ENCODE measurements at regions of chr10 and their contacts with region 1.

Region 1: DNA sequence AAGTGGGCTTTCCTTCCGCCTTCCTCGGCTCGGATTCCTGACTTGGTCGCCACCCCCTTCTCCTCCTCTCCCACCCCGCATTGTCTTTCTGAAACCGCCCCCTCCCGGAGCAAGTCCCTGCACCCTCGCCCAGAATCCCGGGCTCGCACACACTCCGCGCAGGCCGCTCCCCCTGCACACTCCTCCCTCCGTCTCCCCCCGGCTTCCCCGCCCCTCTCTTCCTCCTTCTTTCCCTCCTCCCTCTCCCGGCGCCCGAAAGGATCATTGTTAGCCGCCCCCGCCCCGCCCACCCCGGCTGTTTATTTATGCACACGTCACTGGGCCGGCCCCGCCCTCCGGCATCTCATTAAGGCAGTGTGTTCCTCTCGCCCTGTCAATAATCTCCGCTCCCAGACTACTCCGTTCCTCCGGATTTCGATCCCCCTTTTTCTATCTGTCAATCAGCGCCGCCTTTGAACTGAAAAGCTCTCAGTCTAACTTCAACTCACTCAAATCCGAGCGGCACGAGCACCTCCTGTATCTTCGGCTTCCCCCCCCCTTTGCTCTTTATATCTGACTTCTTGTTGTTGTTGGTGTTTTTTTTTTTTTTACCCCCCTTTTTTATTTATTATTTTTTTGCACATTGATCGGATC is at the start of gene TCF7L2:
- DNase-seq: peak; percentile 95
- ATAC-seq: peak; percentile 87
- H3K4me3 ChIP-seq: peak within 1 kb of the TSS; percentile 90
- H3K27ac ChIP-seq: peak within 1 kb of the TSS; percentile 99
- H3K4me1 ChIP-seq: peaks cover 2% of the 10 kb centered on the region; the same call in 1 of the 2 replicates
- H3K27me3 ChIP-seq: no peaks in the 10 kb centered on the region
- CTCF ChIP-seq: 0 out of 2 replicates have a peak, but pooled peaks have one; percentile 2
- POLR2A ChIP-seq: peak; percentile 80
- RAD21 ChIP-seq: peak; percentile 13; the same call in 1 of the 2 replicates
- total RNA-seq, gene TCF7L2: 1.3 and 1.7 TPM in 2 replicates

Region 2: DNA sequence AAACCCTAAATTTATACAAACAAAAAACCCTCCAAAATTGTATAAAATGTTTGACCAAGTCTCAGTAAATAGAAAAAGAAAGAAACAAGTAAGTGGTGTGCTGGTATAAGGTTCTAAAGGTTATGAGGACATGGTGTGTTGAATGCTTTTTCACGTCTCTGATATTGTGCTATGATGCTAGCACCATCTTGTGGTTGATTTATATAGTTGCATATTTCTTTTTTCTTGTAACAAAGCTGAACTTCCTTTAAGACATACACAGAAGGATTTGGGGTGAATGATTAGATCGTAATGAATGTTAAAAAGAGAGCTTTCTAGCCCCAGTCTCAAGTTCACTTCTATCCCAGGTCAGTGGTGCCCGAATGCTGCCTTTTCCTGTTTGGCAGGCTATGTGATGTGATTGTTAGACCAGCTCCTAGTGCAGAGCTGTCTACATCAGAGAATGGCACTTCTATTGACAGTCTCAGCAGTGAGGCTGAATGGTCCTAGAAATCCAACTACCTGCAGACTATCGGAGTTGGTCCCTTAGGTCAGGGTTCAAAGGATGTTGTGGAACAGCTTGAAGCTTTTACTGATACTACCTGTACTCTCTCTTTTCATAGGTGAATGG is 478.0 kb before region 1 on chr10:
- CTCF ChIA-PET with region 1: interaction called, 5 read pairs
- POLR2A ChIA-PET with region 1: no interaction called
- dilution Hi-C with region 1: no loop called
- in situ Hi-C with region 1: no loop called
- intact Hi-C with region 1: loop called (anchors 1 kb)
- DNase-seq: peak; percentile 68
- ATAC-seq: peak; percentile 76
- H3K4me3 ChIP-seq: no peak overlapping the region
- H3K27ac ChIP-seq: no peak overlapping the region
- H3K4me1 ChIP-seq: no peaks in the 10 kb centered on the region
- H3K27me3 ChIP-seq: no peaks in the 10 kb centered on the region
- CTCF ChIP-seq: peak; percentile 69
- POLR2A ChIP-seq: no peak
- RAD21 ChIP-seq: peak; percentile 77

Region 3: DNA sequence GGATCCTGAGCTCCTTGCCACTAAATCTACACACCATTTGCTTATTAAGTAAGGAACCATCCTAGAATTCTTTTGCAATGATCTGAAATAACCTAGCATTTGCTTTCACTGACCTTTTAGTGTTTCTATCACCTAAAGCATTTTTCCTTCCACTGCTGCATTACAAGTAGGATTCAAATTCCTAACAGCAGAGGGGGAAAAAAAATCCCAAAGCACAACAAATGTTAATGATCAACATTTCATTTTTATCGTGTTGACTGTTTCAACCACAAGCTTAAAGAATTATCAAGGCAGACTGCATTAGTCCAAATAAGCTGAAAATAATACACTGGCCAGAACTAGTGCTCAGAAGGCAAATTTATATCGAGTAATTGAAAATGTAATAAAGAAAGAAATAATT is 174.6 kb before region 1 on chr10:
- CTCF ChIA-PET with region 1: no interaction called
- POLR2A ChIA-PET with region 1: no interaction called
- dilution Hi-C with region 1: no loop called
- in situ Hi-C with region 1: no loop called
- intact Hi-C with region 1: loop called (anchors 5 kb)
- DNase-seq: peak; percentile 46
- ATAC-seq: peak; percentile 62
- H3K4me3 ChIP-seq: no peak overlapping the region
- H3K27ac ChIP-seq: no peak overlapping the region
- H3K4me1 ChIP-seq: no peaks in the 10 kb centered on the region; the same call in 1 of the 2 replicates
- H3K27me3 ChIP-seq: no peaks in the 10 kb centered on the region
- CTCF ChIP-seq: peak; percentile 43
- POLR2A ChIP-seq: no peak
- RAD21 ChIP-seq: peak; percentile 15; the same call in 1 of the 2 replicates

Region 4: GRCh38 chr10:113058523-113058961 is 108.6 kb after region 1 on chr10:
- CTCF ChIA-PET with region 1: no interaction called
- POLR2A ChIA-PET with region 1: no interaction called
- dilution Hi-C with region 1: no loop called
- in situ Hi-C with region 1: no loop called
- intact Hi-C with region 1: loop called (anchors 2 kb)
- DNase-seq: peak; percentile 78
- ATAC-seq: peak; percentile 48
- H3K4me3 ChIP-seq: no peak overlapping the region
- H3K27ac ChIP-seq: peak overlapping the region; percentile 95
- H3K4me1 ChIP-seq: peaks cover 33% of the 10 kb centered on the region
- H3K27me3 ChIP-seq: no peaks in the 10 kb centered on the region
- CTCF ChIP-seq: no peak
- POLR2A ChIP-seq: no peak
- RAD21 ChIP-seq: no peak

Region 5: DNA sequence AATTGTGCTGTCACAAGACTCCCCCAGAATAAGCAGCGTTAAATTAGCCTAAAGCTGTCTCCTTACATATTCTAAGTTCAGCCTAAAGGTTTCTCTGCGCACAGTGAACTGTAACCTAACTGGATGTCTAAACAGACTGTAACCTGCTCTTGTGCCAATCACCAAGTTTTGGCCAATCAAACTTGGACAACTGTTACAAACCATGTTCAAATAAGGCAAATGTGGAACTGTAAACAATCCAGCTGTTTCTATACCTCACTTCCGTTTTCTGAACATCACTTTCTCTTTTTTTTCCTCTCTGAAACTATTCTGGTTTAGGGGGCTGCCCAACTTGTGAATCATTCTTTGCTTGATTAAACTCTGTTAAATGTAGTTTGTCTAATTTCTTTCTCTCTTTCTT is 350.6 kb after region 1 on chr10:
- CTCF ChIA-PET with region 1: no interaction called
- POLR2A ChIA-PET with region 1: no interaction called
- dilution Hi-C with region 1: no loop called
- in situ Hi-C with region 1: no loop called
- intact Hi-C with region 1: loop called (anchors 10 kb)
- DNase-seq: no peak
- ATAC-seq: no peak
- H3K4me3 ChIP-seq: no peak overlapping the region
- H3K27ac ChIP-seq: no peak overlapping the region
- H3K4me1 ChIP-seq: no peaks in the 10 kb centered on the region
- H3K27me3 ChIP-seq: no peaks in the 10 kb centered on the region; the same call in none of the 2 replicates
- CTCF ChIP-seq: no peak
- POLR2A ChIP-seq: no peak
- RAD21 ChIP-seq: no peak

Measured in IMR-90 (cell line).